ENCODE measurements at regions of chr6 and their contacts with region 1.

Region 1: GRCh38 chr6:118968416-118968815 is 33.5 kb upstream of the MCM9 start:
- DNase-seq: no peak
- H3K4me3 ChIP-seq: no peak overlapping the region
- H3K27ac ChIP-seq: no peak overlapping the region
- H3K4me1 ChIP-seq: no peaks in the 10 kb centered on the region
- H3K27me3 ChIP-seq: no peaks in the 10 kb centered on the region
- CTCF ChIP-seq: peak; percentile 65

Region 2: DNA sequence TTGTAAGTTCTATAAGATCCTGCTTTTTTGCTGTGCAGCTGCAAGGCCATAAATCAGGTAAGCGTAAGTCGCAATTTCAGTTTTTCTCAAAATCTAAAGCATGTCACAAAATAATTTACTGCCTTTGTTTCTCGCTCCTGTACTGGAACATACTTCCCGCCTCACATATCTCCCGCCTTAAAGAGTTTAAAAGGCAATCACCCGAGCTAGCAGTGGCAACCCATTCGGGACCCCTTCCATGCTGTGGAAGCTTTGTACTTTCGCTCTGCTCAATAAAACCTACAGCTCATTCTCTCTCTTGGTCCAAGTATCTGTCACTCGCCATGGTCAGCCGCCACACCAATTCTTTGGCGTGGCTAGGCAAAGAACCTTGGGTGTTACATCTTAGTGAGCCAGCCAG is 351.0 kb before region 1 on chr6:
- intact Hi-C with region 1: no loop called
- DNase-seq: no peak
- H3K4me3 ChIP-seq: no peak overlapping the region
- H3K27ac ChIP-seq: no peak overlapping the region
- H3K4me1 ChIP-seq: peaks cover 40% of the 10 kb centered on the region
- H3K27me3 ChIP-seq: no peaks in the 10 kb centered on the region
- CTCF ChIP-seq: no peak

Region 3: DNA sequence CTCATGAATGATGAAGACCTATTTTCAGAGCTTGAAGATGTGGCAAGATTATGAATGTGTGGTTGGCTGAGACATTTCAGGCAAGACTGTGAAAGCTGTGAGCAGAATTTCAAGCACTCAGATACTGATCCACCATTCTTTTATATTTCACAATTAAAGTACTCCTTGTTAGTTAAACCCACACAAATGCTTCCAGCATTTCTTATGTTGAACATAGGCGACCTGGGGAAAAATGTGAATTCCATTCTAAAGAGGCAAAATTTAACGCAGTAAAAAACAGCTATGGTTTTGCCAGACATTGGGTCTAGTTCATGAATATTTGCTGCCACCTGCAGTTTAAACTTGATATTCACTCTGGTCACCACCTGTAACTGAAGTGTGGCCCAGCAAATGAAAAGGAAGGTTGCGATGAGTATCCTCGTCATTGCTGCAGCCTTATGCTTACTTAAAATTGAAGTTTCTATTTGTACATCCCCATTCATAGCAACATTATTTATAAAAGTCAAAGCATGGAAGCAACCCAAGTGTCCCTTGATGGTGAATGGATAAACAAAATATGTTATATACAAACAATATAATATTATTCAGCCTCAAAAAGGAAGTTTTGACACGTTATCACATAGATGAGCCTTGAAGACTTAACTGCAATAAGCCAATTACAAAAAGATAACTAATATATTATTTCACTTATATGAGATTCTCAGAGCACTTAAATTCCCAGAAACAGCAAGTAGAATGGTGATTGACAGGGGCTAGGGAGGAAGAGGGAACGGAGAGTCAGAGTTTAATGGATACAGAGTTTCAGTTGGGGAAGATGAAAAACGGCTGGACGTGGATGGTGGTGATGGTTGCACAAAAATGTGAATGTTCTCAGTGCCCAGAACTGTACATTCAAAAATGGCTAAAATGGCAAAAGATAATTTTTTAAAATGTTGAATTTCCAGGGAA is 142.5 kb after region 1 on chr6:
- intact Hi-C with region 1: loop called (anchors 5 kb)
- DNase-seq: no peak
- H3K4me3 ChIP-seq: no peak overlapping the region
- H3K27ac ChIP-seq: no peak overlapping the region
- H3K4me1 ChIP-seq: peaks cover 11% of the 10 kb centered on the region
- H3K27me3 ChIP-seq: no peaks in the 10 kb centered on the region
- CTCF ChIP-seq: peak; percentile 72

Measured in left ventricle myocardium inferior (tissue), 1 donor.